ENCODE measurements at regions of chr6 and their contacts with region 1.

Region 1: DNA sequence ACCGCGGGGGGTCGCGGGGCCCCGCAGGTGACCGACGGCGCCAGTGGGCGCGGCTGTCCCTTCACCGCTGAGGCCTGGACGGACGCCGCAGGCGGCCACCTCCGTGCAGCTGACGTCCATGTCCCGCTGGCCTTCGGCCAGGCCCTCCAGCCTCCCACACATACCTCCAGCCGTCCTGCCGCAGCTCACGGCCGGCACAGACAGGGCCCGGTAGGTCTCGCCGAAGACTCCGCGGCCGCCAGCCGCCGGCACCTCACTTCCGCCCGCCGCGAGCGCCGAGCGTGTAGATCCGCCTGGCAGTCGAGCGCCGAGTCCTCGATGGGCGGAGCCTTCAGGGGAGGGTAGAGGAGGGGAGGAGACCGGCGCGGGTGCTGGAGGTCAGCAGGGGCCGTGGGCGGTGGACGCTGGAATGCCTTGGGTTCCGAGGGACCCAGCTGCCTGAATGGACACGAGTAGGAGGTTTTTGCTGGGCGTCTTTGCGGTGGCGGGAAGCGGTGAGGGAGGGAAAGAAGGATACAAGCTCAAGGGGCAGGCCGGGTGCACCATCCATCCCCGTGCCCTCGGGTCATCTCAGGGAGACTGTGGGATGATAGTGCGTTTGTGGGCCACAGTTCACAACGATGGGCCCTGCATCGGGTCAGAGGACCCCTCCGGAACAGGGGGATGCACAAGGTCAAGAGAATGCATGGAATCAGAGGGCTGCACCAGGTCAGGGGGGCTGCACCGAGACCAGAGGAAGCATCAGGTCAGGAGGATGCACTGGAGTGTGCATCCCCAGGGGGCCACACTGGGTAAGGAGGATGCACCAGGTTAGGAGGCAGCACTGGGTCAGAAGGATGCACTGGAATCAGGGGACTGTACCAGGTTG is at the start of gene EXOC2:
- DNase-seq: peak; percentile 86
- H3K4me3 Mint-ChIP-seq: peak within 1 kb of the TSS; percentile 95
- H3K27ac Mint-ChIP-seq: peak within 1 kb of the TSS; percentile 93
- H3K4me1 Mint-ChIP-seq: peaks cover 31% of the 10 kb centered on the region
- H3K27me3 Mint-ChIP-seq: no peaks in the 10 kb centered on the region
- total RNA-seq, gene EXOC2: 44.5 and 47.1 TPM in 2 replicates

Region 2: GRCh38 chr6:336159-337019 is 356.7 kb before region 1 on chr6:
- intact Hi-C with region 1: loop called (anchors 5 kb)
- DNase-seq: no peak
- H3K4me3 Mint-ChIP-seq: peak overlapping the region; percentile 21
- H3K27ac Mint-ChIP-seq: peak overlapping the region; percentile 57
- H3K4me1 Mint-ChIP-seq: peaks cover 54% of the 10 kb centered on the region
- H3K27me3 Mint-ChIP-seq: no peaks in the 10 kb centered on the region

Region 3: GRCh38 chr6:391559-392440 is 301.3 kb before region 1 on chr6 and contains the start of gene IRF4:
- intact Hi-C with region 1: no loop called
- DNase-seq: peak; percentile 69
- H3K4me3 Mint-ChIP-seq: peak within 1 kb of the TSS; percentile 98
- H3K27ac Mint-ChIP-seq: peak within 1 kb of the TSS; percentile 98
- H3K4me1 Mint-ChIP-seq: peaks cover 41% of the 10 kb centered on the region
- H3K27me3 Mint-ChIP-seq: peaks cover 3% of the 10 kb centered on the region
- total RNA-seq, gene IRF4: 911 and 929 TPM in 2 replicates

Region 4: DNA sequence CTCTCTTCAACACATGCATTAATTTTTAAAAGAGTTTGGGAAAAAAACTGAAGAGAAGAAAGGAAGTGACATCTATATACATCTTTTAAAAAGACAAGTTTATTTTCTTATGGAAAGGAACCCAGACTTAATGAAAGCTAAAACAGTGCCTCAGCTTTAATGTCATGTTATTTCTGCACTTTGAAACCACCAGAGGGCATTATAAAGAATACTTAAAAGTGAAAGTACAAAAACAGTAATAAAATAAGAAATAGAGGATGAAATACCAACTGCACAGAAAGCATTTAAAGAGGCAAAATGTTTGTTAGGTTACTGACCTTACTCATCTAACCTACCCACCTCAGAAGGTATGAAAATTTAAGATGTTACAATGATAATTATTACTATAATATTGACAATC is 135.0 kb before region 1 on chr6:
- intact Hi-C with region 1: loop called (anchors 2 kb)
- DNase-seq: no peak
- H3K4me3 Mint-ChIP-seq: no peak overlapping the region
- H3K27ac Mint-ChIP-seq: peak overlapping the region; percentile 55
- H3K4me1 Mint-ChIP-seq: peaks cover 50% of the 10 kb centered on the region
- H3K27me3 Mint-ChIP-seq: no peaks in the 10 kb centered on the region

Region 5: GRCh38 chr6:624979-625378 is 68.1 kb before region 1 on chr6:
- intact Hi-C with region 1: loop called (anchors 5 kb)
- DNase-seq: no peak
- H3K4me3 Mint-ChIP-seq: no peak overlapping the region
- H3K27ac Mint-ChIP-seq: no peak overlapping the region
- H3K4me1 Mint-ChIP-seq: peaks cover 22% of the 10 kb centered on the region
- H3K27me3 Mint-ChIP-seq: no peaks in the 10 kb centered on the region

Region 6: GRCh38 chr6:650098-650497 is 43.0 kb before region 1 on chr6:
- intact Hi-C with region 1: no loop called
- DNase-seq: no peak
- H3K4me3 Mint-ChIP-seq: no peak overlapping the region
- H3K27ac Mint-ChIP-seq: no peak overlapping the region
- H3K4me1 Mint-ChIP-seq: peaks cover 9% of the 10 kb centered on the region
- H3K27me3 Mint-ChIP-seq: no peaks in the 10 kb centered on the region

Region 7: GRCh38 chr6:710601-711571 is 17.8 kb after region 1 on chr6:
- intact Hi-C with region 1: loop called (anchors 1 kb)
- DNase-seq: peak; percentile 64
- H3K4me3 Mint-ChIP-seq: peak overlapping the region; percentile 95
- H3K27ac Mint-ChIP-seq: peak overlapping the region; percentile 99
- H3K4me1 Mint-ChIP-seq: peaks cover 44% of the 10 kb centered on the region
- H3K27me3 Mint-ChIP-seq: no peaks in the 10 kb centered on the region

Region 8: DNA sequence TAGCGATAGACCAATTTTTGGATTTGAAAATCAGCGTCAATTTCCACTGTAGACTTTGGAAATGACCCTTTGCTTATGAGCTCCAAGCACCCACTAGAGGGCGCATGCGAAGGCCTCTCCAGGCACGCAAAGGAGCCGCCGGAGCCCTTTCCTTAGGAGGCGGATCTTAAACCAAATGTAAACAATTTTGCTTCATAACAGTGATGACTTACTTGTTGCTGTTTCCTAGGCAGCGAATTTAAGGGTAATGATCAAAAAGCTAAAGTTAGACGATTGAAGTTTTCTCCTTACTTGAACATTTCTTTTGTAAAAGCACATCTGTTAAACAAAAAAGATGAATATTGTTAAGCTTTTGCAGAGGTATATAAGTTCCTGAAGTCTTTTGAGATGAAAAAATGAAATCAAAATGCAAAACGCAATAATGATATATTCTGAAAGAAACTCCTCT is 29.0 kb after region 1 on chr6:
- intact Hi-C with region 1: loop called (anchors 1 kb)
- DNase-seq: peak; percentile 52
- H3K4me3 Mint-ChIP-seq: no peak overlapping the region
- H3K27ac Mint-ChIP-seq: no peak overlapping the region
- H3K4me1 Mint-ChIP-seq: no peaks in the 10 kb centered on the region
- H3K27me3 Mint-ChIP-seq: peaks cover 8% of the 10 kb centered on the region

Region 9: GRCh38 chr6:747028-747427 is 53.9 kb after region 1 on chr6:
- intact Hi-C with region 1: no loop called
- DNase-seq: no peak
- H3K4me3 Mint-ChIP-seq: no peak overlapping the region
- H3K27ac Mint-ChIP-seq: no peak overlapping the region
- H3K4me1 Mint-ChIP-seq: peaks cover under 1% of the 10 kb centered on the region
- H3K27me3 Mint-ChIP-seq: peaks cover 15% of the 10 kb centered on the region

Measured in activated T-helper 1 cell treated with anti-CD3 and anti-CD28 coated beads, Interleukin-12 subunit alpha, Interleukin-12 subunit beta, Interleukin-2, Interleukin-4 antibody, amounts not matched to agents 30 ng/mL and 10 ng/mL and 1 ng/mL, durations not matched to agents 14 hours and 24 hours and 36 hours (primary cell).